B cell (primary cell): ENCODE measurements at regions of chr13 and their contacts with region 1.

Region 1: GRCh38 chr13:99176309-99177276 is 24.1 kb upstream of the UBAC2 start:
- DNase-seq: peak; percentile 88
- ATAC-seq: peak; percentile 84
- H3K4me3 ChIP-seq: no peak overlapping the region
- H3K4me3 Mint-ChIP-seq: peak overlapping the region; percentile 58
- H3K27ac ChIP-seq: no peak overlapping the region
- H3K27ac Mint-ChIP-seq: peak overlapping the region; percentile 72
- H3K4me1 ChIP-seq: peaks cover 37 to 43% of the 10 kb centered on the region in 2 donors
- H3K4me1 Mint-ChIP-seq: peaks cover 39% of the 10 kb centered on the region
- H3K27me3 ChIP-seq: no peaks in the 10 kb centered on the region
- H3K27me3 Mint-ChIP-seq: no peaks in the 10 kb centered on the region
- CTCF ChIP-seq: peak; percentile 96

Region 2: DNA sequence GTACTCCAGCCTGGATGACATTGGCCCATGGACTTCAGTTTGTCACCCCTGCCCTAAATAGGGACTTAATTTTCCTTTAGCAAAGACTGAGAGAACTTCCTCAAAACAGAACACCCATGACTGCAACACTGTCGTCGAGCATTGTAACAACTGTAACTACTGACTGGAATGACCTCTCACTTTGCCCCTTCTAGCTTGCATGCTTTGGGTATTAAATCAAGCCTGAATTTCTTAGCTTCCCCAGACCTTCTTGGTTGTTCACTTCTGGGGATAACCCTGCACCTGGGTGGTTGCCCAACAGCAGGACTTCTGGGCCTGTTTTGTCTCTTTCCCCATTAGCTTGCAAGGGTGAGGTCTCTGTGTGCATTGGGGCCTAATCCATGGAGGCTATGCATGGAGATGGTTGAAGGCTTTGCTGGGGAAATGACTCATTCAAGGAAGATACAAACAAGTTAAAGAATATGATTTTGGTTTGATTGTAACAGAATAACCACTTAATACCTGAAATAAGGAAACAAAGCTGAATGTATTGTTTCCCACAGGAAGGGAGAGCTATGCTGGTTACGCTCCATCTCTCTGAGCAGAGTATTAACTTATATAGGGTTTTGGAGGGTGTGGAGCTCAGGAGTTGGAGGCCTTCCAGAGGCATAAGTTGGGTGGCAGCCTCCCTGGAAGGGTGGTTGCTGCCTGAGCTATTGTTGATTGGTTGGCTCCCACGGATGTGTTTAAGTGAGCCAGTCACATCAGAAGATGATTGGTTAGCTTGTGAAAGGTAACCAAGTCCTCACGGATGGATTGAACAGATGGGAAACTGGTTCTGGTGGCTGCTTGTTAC is 10.6 kb before region 1 on chr13:
- CTCF ChIA-PET with region 1: interaction called, 13 read pairs
- POLR2A ChIA-PET with region 1: no interaction called
- intact Hi-C with region 1: no loop called
- DNase-seq: no peak
- ATAC-seq: no peak
- H3K4me3 ChIP-seq: no peak overlapping the region
- H3K4me3 Mint-ChIP-seq: no peak overlapping the region
- H3K27ac ChIP-seq: no peak overlapping the region
- H3K27ac Mint-ChIP-seq: no peak overlapping the region
- H3K4me1 ChIP-seq: peaks cover 0 to 3% of the 10 kb centered on the region in 2 donors
- H3K4me1 Mint-ChIP-seq: peaks cover 7% of the 10 kb centered on the region
- H3K27me3 ChIP-seq: no peaks in the 10 kb centered on the region
- H3K27me3 Mint-ChIP-seq: no peaks in the 10 kb centered on the region
- CTCF ChIP-seq: no peak

Region 3: GRCh38 chr13:99200432-99201167 is 24.0 kb after region 1 on chr13 and contains the start of gene UBAC2:
- CTCF ChIA-PET with region 1: interaction called, 22 read pairs
- POLR2A ChIA-PET with region 1: interaction called, 5 read pairs
- intact Hi-C with region 1: loop called (anchors 2 kb)
- DNase-seq: peak; percentile 98
- ATAC-seq: peak; percentile 73
- H3K4me3 ChIP-seq: peak within 1 kb of the TSS; percentile 71 to 97 (median 92)
- H3K4me3 Mint-ChIP-seq: peak within 1 kb of the TSS; percentile 97
- H3K27ac ChIP-seq: peak within 1 kb of the TSS; percentile 97
- H3K27ac Mint-ChIP-seq: peak within 1 kb of the TSS; percentile 94
- H3K4me1 ChIP-seq: peaks cover 38 to 46% of the 10 kb centered on the region in 2 donors
- H3K4me1 Mint-ChIP-seq: peaks cover 54% of the 10 kb centered on the region
- H3K27me3 ChIP-seq: no peaks in the 10 kb centered on the region
- H3K27me3 Mint-ChIP-seq: no peaks in the 10 kb centered on the region
- CTCF ChIP-seq: no peak
- total RNA-seq, gene UBAC2: 52.9 and 56.3 TPM in 2 replicates

Region 4: GRCh38 chr13:99250982-99251825 is 74.6 kb after region 1 on chr13:
- CTCF ChIA-PET with region 1: interaction called, 29 read pairs
- POLR2A ChIA-PET with region 1: no interaction called
- intact Hi-C with region 1: no loop called
- DNase-seq: no peak
- ATAC-seq: no peak
- H3K4me3 ChIP-seq: no peak overlapping the region
- H3K4me3 Mint-ChIP-seq: no peak overlapping the region
- H3K27ac ChIP-seq: peak overlapping the region in 1 of 2 donors; percentile 7
- H3K27ac Mint-ChIP-seq: peak overlapping the region; percentile 73
- H3K4me1 ChIP-seq: peaks cover 22 to 24% of the 10 kb centered on the region in 2 donors
- H3K4me1 Mint-ChIP-seq: peaks cover 48% of the 10 kb centered on the region
- H3K27me3 ChIP-seq: no peaks in the 10 kb centered on the region
- H3K27me3 Mint-ChIP-seq: no peaks in the 10 kb centered on the region
- CTCF ChIP-seq: no peak

Region 5: GRCh38 chr13:99296398-99296797 is 119.8 kb after region 1 on chr13:
- CTCF ChIA-PET with region 1: interaction called, 17 read pairs
- POLR2A ChIA-PET with region 1: no interaction called
- intact Hi-C with region 1: no loop called
- DNase-seq: peak; percentile 45
- ATAC-seq: no peak
- H3K4me3 ChIP-seq: peak overlapping the region in 3 of 5 experiments; percentile 2 to 47 (median 17)
- H3K4me3 Mint-ChIP-seq: peak overlapping the region; percentile 72
- H3K27ac ChIP-seq: peak overlapping the region; percentile 32 to 78
- H3K27ac Mint-ChIP-seq: peak overlapping the region; percentile 59
- H3K4me1 ChIP-seq: peaks cover 73 to 81% of the 10 kb centered on the region in 2 donors
- H3K4me1 Mint-ChIP-seq: peaks cover 82% of the 10 kb centered on the region
- H3K27me3 ChIP-seq: no peaks in the 10 kb centered on the region
- H3K27me3 Mint-ChIP-seq: no peaks in the 10 kb centered on the region
- CTCF ChIP-seq: no peak

Region 6: GRCh38 chr13:99448546-99448945 is 272.0 kb after region 1 on chr13:
- CTCF ChIA-PET with region 1: interaction called, 11 read pairs
- POLR2A ChIA-PET with region 1: no interaction called
- intact Hi-C with region 1: no loop called
- DNase-seq: no peak
- ATAC-seq: no peak
- H3K4me3 ChIP-seq: no peak overlapping the region
- H3K4me3 Mint-ChIP-seq: no peak overlapping the region
- H3K27ac ChIP-seq: no peak overlapping the region
- H3K27ac Mint-ChIP-seq: no peak overlapping the region
- H3K4me1 ChIP-seq: no peaks in the 10 kb centered on the region
- H3K4me1 Mint-ChIP-seq: no peaks in the 10 kb centered on the region
- H3K27me3 ChIP-seq: no peaks in the 10 kb centered on the region
- H3K27me3 Mint-ChIP-seq: peaks cover 2% of the 10 kb centered on the region
- CTCF ChIP-seq: no peak